Right lobe of liver (tissue), 6 donors: ENCODE measurements at regions of chr1 and their contacts with region 1.

Region 1: GRCh38 chr1:67749844-67750689 is 65.1 kb downstream of the GADD45A start:
- DNase-seq: no peak
- ATAC-seq: peak; percentile 15 to 67 (median 32)
- H3K4me3 ChIP-seq: no peak overlapping the region
- H3K27ac ChIP-seq: peak overlapping the region; percentile 24 to 78 (median 54)
- H3K4me1 ChIP-seq: peaks cover 0 to 27% (median 11%) of the 10 kb centered on the region in 4 donors
- H3K27me3 ChIP-seq: no peaks in the 10 kb centered on the region
- CTCF ChIP-seq: no peak
- POLR2A ChIP-seq: peak; percentile 48

Region 2: GRCh38 chr1:67535474-67535873 is 214.6 kb before region 1 on chr1:
- intact Hi-C with region 1: loop called in 1 of 2 experiments (anchors 10 kb)
- DNase-seq: peak; percentile 78 to 90 (median 85)
- ATAC-seq: peak; percentile 65 to 81 (median 70)
- H3K4me3 ChIP-seq: no peak overlapping the region
- H3K27ac ChIP-seq: peak overlapping the region; percentile 11 to 98 (median 69)
- H3K4me1 ChIP-seq: peaks cover 0 to 81% (median 22%) of the 10 kb centered on the region in 4 donors
- H3K27me3 ChIP-seq: no peaks in the 10 kb centered on the region
- CTCF ChIP-seq: peak; percentile 96 to 98 (median 97)
- POLR2A ChIP-seq: no peak

Region 3: DNA sequence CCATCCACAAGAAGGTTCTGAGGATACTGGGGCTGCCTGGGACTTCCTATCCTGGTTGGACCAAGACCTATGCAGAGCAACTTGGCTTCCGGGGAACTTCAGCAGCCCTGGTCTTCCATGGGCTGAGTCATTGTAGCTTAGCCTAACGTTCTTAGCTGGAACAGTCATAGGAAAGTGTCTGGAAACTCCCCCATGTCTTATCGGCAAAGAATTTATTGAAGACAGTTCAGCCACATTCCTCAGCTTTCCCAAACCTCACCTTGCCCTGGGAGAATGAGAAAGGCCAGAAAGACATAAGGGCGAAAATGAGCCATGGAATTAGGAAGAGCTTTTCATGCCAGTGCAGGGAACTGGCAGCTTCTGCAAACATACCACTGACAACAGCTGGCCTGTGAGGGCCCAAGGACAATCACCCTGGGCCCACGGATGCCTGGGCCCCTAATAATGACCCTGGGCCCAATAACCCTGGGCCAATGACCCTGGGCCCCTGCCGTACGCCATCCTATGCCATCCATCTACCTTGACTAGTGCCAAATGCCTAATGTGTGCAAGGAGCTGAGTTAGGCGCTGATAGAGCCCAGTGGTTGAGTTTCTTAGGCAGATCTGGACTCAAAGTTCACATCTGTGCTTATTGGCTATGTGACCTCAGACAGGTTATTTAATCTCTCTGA is 179.5 kb before region 1 on chr1:
- intact Hi-C with region 1: loop called in 1 of 2 experiments (anchors 10 kb)
- DNase-seq: peak in 1 of 3 donors; percentile 58
- ATAC-seq: peak in 1 of 4 donors; percentile 8
- H3K4me3 ChIP-seq: no peak overlapping the region
- H3K27ac ChIP-seq: peak overlapping the region in 2 of 3 donors; percentile 78 to 93
- H3K4me1 ChIP-seq: peaks cover 0 to 42% (median 19%) of the 10 kb centered on the region in 4 donors
- H3K27me3 ChIP-seq: no peaks in the 10 kb centered on the region
- CTCF ChIP-seq: no peak
- POLR2A ChIP-seq: no peak

Region 4: GRCh38 chr1:67874501-67875111 is 124.5 kb after region 1 on chr1:
- intact Hi-C with region 1: no loop called
- DNase-seq: no peak
- ATAC-seq: no peak
- H3K4me3 ChIP-seq: no peak overlapping the region
- H3K27ac ChIP-seq: no peak overlapping the region
- H3K4me1 ChIP-seq: no peaks in the 10 kb centered on the region
- H3K27me3 ChIP-seq: no peaks in the 10 kb centered on the region
- CTCF ChIP-seq: no peak
- POLR2A ChIP-seq: no peak